ENCODE measurements at regions of chr11 and their contacts with region 1.

Region 1: GRCh38 chr11:129881570-129882170 is 13.7 kb downstream of the NFRKB start:
- DNase-seq: peak; percentile 27 to 51
- ATAC-seq: peak; percentile 77 to 91; a peak in 5 of 6 replicates
- H3K4me3 ChIP-seq: no peak overlapping the region
- H3K27ac ChIP-seq: no peak overlapping the region
- H3K4me1 ChIP-seq: no peaks in the 10 kb centered on the region
- CTCF ChIP-seq: peak; percentile 38
- EP300 ChIP-seq: no peak
- POLR2A ChIP-seq: no peak
- RAD21 ChIP-seq: peak; percentile 38 to 58; a peak in 4 of 5 replicates

Region 2: GRCh38 chr11:129895126-129896041 is 13.7 kb after region 1 on chr11 and contains the start of gene NFRKB:
- CTCF ChIA-PET with region 1: interaction called, 12 read pairs
- POLR2A ChIA-PET with region 1: interaction called, 3 read pairs
- DNase-seq: peak; percentile 58 to 76
- ATAC-seq: peak; percentile 95 to 99
- H3K4me3 ChIP-seq: peak within 1 kb of the TSS; percentile 73
- H3K27ac ChIP-seq: peak within 1 kb of the TSS; percentile 83 to 100
- H3K4me1 ChIP-seq: peaks cover 11% of the 10 kb centered on the region; the same call in 1 of the 3 replicates
- CTCF ChIP-seq: no peak
- EP300 ChIP-seq: no peak
- POLR2A ChIP-seq: peak; percentile 70
- RAD21 ChIP-seq: no peak
- polyA plus RNA-seq, gene NFRKB: 10.2 and 11.8 TPM in 2 replicates

Region 3: DNA sequence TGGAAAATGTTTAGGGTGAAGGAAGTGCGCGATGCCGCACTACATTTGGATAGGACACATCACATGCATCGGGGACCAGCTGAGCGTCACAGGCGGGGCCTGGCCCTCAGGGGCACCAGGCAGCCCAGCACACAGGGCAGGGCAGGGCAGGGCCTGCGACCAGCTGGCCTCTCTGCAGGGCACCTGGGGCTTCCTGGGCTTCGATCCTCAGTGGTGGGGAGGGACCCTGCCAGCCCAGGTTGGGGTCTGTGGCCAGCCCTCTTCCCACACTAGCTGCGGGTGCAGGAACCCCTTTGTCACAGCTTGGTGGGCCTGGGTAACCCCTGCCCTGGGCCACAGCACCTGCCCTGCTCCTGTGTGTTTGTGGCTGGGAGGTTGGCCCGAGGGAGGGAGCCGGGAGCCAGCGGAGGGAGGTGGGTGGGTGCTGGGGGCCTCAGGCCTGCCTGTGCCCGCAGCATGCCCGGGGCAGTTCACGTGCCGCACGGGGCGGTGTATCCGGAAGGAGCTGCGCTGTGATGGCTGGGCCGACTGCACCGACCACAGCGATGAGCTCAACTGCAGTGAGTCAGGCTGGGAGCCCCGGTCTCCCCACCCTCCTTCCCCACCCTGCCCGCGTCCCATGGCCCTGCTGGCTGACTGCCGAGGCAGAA is 315.8 kb after region 1 on chr11:
- CTCF ChIA-PET with region 1: no interaction called
- POLR2A ChIA-PET with region 1: no interaction called
- DNase-seq: no peak
- ATAC-seq: no peak
- H3K4me3 ChIP-seq: no peak overlapping the region
- H3K27ac ChIP-seq: no peak overlapping the region
- H3K4me1 ChIP-seq: no peaks in the 10 kb centered on the region
- CTCF ChIP-seq: no peak
- EP300 ChIP-seq: no peak
- POLR2A ChIP-seq: no peak
- RAD21 ChIP-seq: no peak

Measured in A549 (cell line).